ENCODE measurements at regions of chr10 and their contacts with region 1.

Region 1: DNA sequence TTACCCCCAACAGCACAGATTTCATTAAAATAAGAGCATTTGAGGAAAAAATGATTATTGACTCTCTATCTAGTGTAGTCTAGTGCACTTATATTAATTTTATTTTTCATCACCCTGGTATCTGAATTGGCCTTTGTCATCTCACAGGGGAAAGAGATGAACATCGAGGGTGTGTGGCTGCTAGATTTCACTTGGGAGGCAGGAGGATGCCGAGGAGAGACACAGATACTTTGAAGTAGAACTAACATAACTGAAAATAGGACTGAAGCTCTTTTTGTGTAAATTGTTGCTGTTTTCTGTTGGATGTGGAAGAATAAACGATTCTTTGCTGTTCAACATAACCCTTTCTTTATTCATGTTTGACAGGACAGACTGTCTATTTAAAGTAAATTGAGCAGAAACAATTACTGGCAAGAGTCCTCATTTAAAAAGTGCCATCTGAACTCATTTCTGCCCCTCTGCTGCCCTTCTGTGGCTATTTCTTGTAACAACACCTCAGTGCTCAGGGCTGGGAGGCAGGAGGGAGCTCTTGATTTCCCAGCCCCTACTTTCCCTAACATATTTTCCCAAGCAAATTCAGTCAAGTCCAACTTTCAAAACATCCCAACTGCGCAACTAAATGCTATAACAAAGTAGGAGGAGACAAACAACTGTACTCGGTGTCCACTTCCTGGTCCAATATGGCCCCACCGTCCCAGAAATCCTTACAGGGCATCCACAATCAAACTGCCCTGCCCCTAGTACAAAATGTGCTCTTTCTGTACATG is 15.6 kb downstream of the LYZL1 start:
- DNase-seq: peak; percentile 87
- H3K4me3 ChIP-seq: no peak overlapping the region
- H3K27ac ChIP-seq: no peak overlapping the region
- H3K4me1 ChIP-seq: peaks cover 7% of the 10 kb centered on the region
- H3K27me3 ChIP-seq: no peaks in the 10 kb centered on the region
- CTCF ChIP-seq: peak; percentile 86

Region 2: GRCh38 chr10:28628184-28628893 is 676.1 kb before region 1 on chr10:
- CTCF ChIA-PET with region 1: interaction called, 12 read pairs
- POLR2A ChIA-PET with region 1: no interaction called
- intact Hi-C with region 1: loop called (anchors 1 kb)
- DNase-seq: peak; percentile 85
- H3K4me3 ChIP-seq: no peak overlapping the region
- H3K27ac ChIP-seq: no peak overlapping the region
- H3K4me1 ChIP-seq: peaks cover 14% of the 10 kb centered on the region
- H3K27me3 ChIP-seq: no peaks in the 10 kb centered on the region
- CTCF ChIP-seq: peak; percentile 97

Region 3: DNA sequence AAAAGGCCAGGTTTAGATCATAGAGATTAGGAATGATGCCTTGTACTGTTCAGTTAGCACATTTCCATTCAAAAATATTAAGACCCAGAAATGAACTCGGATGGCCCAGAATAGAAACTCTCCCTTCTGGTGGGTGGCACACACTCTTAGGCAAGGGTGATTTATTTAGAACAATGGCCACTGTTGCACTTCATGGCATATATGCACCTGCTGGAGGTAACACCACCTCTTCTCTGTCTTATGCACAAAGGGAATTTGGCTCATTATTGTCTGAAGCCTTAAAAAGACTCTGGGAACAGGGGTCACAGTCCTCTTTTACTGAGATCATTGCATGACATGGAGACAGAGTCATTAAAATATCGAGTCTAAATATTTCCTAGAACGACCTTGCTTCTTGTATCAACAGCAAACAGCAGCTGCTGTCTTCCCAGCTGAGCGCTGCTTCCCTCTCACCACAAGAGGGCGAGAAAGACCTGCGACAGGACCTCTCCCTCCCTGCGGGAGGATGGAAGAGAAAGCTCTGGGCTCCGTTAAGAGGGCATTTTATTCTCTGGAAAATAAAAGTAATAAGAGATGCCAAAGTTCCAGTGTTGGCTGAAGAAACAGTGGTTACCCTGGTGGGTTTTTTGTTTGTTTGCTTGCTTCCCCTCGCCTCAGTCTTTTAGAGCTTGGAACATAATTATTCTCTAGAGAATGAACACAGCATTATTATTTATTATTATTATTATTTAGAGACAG is 640.7 kb before region 1 on chr10:
- CTCF ChIA-PET with region 1: interaction called, 22 read pairs
- POLR2A ChIA-PET with region 1: no interaction called
- intact Hi-C with region 1: loop called (anchors 1 kb)
- DNase-seq: peak; percentile 94
- H3K4me3 ChIP-seq: no peak overlapping the region
- H3K27ac ChIP-seq: no peak overlapping the region
- H3K4me1 ChIP-seq: no peaks in the 10 kb centered on the region
- H3K27me3 ChIP-seq: no peaks in the 10 kb centered on the region
- CTCF ChIP-seq: peak; percentile 98

Region 4: DNA sequence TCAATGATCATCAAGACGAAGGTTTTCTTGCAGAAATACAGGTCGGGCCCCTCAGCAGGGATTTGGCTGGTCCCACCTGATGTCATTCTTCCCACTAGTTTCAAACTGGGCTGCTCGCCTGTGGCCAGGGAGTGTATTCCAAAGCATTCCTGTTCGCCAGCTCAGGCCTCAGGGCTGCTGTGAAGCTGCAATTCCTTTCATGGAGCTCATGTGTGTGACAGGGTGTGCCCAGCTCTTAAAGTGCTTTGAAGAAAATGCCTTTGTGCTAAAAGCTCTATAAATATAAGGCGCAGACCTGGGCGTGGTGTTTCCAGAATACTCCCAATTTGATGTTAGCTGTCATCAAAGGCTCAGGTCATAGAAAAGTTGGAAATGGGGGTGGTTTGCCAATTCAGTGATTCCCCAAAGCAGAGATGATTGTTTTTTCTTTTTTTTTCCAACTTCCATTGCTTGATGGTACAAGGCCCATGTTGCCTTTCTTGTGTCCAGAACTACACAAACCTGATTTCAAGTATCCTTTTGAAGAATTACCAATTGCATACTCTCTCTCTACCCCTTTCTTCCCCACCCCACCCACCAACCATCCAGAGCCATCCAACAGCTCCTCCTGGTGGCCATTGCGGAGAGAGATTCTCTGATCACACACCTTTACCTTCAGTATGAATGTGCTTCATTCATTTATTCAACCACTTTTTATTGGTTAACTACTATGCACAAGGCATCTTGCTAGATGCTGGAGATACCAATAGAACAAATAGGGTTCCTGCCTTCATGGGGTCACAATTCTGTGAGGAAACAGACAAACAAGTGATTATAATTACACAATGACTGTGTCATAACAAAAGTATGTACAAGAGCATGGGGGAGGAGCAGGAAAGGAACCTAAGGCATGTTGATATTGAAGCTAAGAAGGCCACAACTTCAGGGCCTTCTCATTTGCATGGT is 312.8 kb before region 1 on chr10:
- CTCF ChIA-PET with region 1: interaction called, 5 read pairs
- POLR2A ChIA-PET with region 1: no interaction called
- intact Hi-C with region 1: loop called (anchors 5 kb)
- DNase-seq: peak; percentile 75
- H3K4me3 ChIP-seq: no peak overlapping the region
- H3K27ac ChIP-seq: no peak overlapping the region
- H3K4me1 ChIP-seq: no peaks in the 10 kb centered on the region
- H3K27me3 ChIP-seq: no peaks in the 10 kb centered on the region
- CTCF ChIP-seq: peak; percentile 91

Region 5: DNA sequence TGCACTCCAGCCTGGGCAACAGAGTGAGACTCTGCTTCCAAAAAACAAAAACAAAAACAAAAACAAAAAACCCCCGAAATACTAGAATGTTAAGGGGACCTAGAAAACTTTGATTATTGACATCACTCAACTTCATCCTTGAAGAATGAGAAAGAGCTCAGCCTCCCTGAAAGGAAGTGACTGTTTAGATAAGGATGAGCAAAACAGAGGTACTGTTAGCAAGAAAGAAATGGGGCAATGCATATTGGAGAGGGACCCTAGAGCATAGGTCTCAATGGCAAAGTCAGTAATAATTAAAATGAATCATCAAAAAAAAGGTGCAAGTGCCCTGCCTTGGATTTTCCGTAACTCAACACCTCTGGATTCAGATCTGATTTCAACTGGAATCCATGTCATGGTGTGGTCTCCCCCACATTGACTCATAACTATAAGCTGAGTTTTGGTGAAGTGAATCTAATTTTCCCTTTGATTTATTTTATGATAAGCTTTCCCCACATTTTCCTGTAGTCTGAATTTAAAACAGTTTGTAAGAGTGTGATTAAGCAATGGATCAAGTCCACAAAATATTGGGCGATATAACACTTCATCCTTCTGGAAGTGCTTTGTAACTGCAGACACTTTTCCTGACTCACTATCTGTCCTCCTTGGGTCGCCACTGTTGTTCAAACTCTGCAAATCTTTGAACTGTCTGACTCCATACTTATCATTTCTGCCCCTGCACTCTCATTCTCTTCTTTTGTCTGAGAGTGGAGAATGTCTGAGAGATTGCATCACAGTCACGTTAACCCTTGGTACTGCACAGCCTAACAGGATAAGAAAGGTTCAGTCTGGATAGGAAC is 240.4 kb before region 1 on chr10:
- CTCF ChIA-PET with region 1: interaction called, 3 read pairs
- POLR2A ChIA-PET with region 1: no interaction called
- intact Hi-C with region 1: loop called (anchors 10 kb)
- DNase-seq: peak; percentile 62
- H3K4me3 ChIP-seq: no peak overlapping the region
- H3K27ac ChIP-seq: no peak overlapping the region
- H3K4me1 ChIP-seq: peaks cover 10% of the 10 kb centered on the region
- H3K27me3 ChIP-seq: no peaks in the 10 kb centered on the region
- CTCF ChIP-seq: no peak

Region 6: GRCh38 chr10:29131952-29132820 is 172.3 kb before region 1 on chr10:
- CTCF ChIA-PET with region 1: interaction called, 3 read pairs
- POLR2A ChIA-PET with region 1: no interaction called
- intact Hi-C with region 1: loop called (anchors 2 kb)
- DNase-seq: peak; percentile 90
- H3K4me3 ChIP-seq: peak overlapping the region; percentile 4
- H3K27ac ChIP-seq: peak overlapping the region; percentile 38
- H3K4me1 ChIP-seq: peaks cover 35% of the 10 kb centered on the region
- H3K27me3 ChIP-seq: no peaks in the 10 kb centered on the region
- CTCF ChIP-seq: no peak

Region 7: DNA sequence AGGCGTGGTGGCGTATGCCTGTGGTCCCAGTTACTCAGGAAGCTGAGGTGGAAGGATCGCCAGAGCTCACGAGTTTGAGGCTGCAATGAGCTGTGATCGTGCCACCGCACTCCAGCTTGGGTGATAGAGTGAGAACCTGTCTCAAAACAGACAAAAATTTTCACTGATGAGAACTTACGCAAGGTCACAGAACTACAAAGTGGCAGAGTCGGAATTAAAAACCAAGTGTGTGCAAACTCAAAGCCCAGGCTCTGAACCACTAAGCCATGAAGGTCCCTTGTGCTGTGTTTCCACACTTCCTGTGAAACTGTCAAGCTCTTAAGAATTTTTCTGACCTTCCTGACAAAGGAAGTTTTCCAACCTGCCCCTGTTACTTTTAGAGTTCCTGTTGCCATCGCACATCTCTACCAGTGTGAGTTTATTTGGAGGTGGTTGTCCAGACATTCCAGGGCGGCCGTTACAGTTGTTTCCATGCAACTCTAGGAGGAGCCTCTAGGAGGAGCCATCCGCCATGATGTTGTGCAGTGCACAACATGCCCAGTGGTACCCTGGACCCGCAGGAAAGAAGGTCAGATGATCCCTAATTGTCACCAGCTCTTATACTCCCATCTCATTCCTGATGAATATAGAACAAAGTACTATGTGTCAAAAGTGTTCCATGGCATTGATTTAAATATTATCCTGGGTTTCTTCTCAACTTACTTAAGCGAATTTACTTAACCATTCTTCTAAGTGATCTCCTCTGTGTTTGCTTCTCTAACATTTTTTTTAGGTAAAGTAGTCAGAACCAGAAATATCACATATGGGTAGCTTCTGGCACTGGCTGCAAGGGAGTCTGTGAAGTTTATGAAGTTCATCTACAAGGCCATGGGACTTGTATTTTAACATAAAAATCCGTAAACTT is 64.6 kb before region 1 on chr10:
- CTCF ChIA-PET with region 1: interaction called, 3 read pairs
- POLR2A ChIA-PET with region 1: no interaction called
- intact Hi-C with region 1: loop called (anchors 1 kb)
- DNase-seq: peak; percentile 64
- H3K4me3 ChIP-seq: no peak overlapping the region
- H3K27ac ChIP-seq: no peak overlapping the region
- H3K4me1 ChIP-seq: peaks cover 8% of the 10 kb centered on the region
- H3K27me3 ChIP-seq: no peaks in the 10 kb centered on the region
- CTCF ChIP-seq: peak; percentile 80